ENCODE measurements at regions of chr20 and their contacts with region 1.

Region 1: GRCh38 chr20:32396646-32397160 is 38.6 kb downstream of the ASXL1 start:
- DNase-seq: no peak
- ATAC-seq: no peak
- H3K4me3 Mint-ChIP-seq: no peak overlapping the region
- H3K27ac Mint-ChIP-seq: no peak overlapping the region
- H3K4me1 Mint-ChIP-seq: peaks cover 40% of the 10 kb centered on the region
- H3K27me3 Mint-ChIP-seq: no peaks in the 10 kb centered on the region

Region 2: GRCh38 chr20:32380745-32381144 is 16.0 kb before region 1 on chr20:
- CTCF ChIA-PET with region 1: interaction called, 3 read pairs
- POLR2A ChIA-PET with region 1: interaction called, 10 read pairs
- intact Hi-C with region 1: no loop called
- DNase-seq: no peak
- ATAC-seq: no peak
- H3K4me3 Mint-ChIP-seq: no peak overlapping the region
- H3K27ac Mint-ChIP-seq: peak overlapping the region; percentile 8
- H3K4me1 Mint-ChIP-seq: peaks cover 27% of the 10 kb centered on the region
- H3K27me3 Mint-ChIP-seq: no peaks in the 10 kb centered on the region

Measured in activated CD4-positive, alpha-beta T cell treated with anti-CD3 and anti-CD28 coated beads for 36 hours (primary cell).